IMR-90 (cell line): ENCODE measurements at regions of chr2 and their contacts with region 1.

Region 1: GRCh38 chr2:230614913-230615332 is 97.7 kb upstream of the CAB39 start:
- DNase-seq: no peak
- ATAC-seq: no peak
- H3K4me3 ChIP-seq: no peak overlapping the region
- H3K27ac ChIP-seq: no peak overlapping the region
- H3K4me1 ChIP-seq: peaks cover 10% of the 10 kb centered on the region
- H3K27me3 ChIP-seq: no peaks in the 10 kb centered on the region
- CTCF ChIP-seq: no peak
- POLR2A ChIP-seq: no peak
- RAD21 ChIP-seq: no peak

Region 2: GRCh38 chr2:229780856-229781773 is 833.8 kb before region 1 on chr2:
- CTCF ChIA-PET with region 1: no interaction called
- POLR2A ChIA-PET with region 1: no interaction called
- dilution Hi-C with region 1: no loop called
- in situ Hi-C with region 1: no loop called
- intact Hi-C with region 1: loop called (anchors 10 kb)
- DNase-seq: peak; percentile 77
- ATAC-seq: peak; percentile 85
- H3K4me3 ChIP-seq: no peak overlapping the region
- H3K27ac ChIP-seq: no peak overlapping the region; the same call in 1 of the 2 replicates
- H3K4me1 ChIP-seq: peaks cover 8% of the 10 kb centered on the region
- H3K27me3 ChIP-seq: no peaks in the 10 kb centered on the region
- CTCF ChIP-seq: peak; percentile 80
- POLR2A ChIP-seq: no peak
- RAD21 ChIP-seq: peak; percentile 46

Region 3: GRCh38 chr2:230007931-230008707 is 606.8 kb before region 1 on chr2:
- CTCF ChIA-PET with region 1: no interaction called
- POLR2A ChIA-PET with region 1: no interaction called
- dilution Hi-C with region 1: no loop called
- in situ Hi-C with region 1: loop called (anchors 5 kb)
- intact Hi-C with region 1: loop called (anchors 1 kb)
- DNase-seq: peak; percentile 71
- ATAC-seq: peak; percentile 52
- H3K4me3 ChIP-seq: no peak overlapping the region
- H3K27ac ChIP-seq: no peak overlapping the region
- H3K4me1 ChIP-seq: peaks cover 15% of the 10 kb centered on the region
- H3K27me3 ChIP-seq: no peaks in the 10 kb centered on the region
- CTCF ChIP-seq: peak; percentile 88
- POLR2A ChIP-seq: peak; percentile 34; the same call in 1 of the 2 replicates
- RAD21 ChIP-seq: peak; percentile 88

Region 4: GRCh38 chr2:230068016-230068650 is 546.8 kb before region 1 on chr2:
- CTCF ChIA-PET with region 1: no interaction called
- POLR2A ChIA-PET with region 1: no interaction called
- dilution Hi-C with region 1: no loop called
- in situ Hi-C with region 1: loop called (anchors 5 kb)
- intact Hi-C with region 1: loop called (anchors 1 kb)
- DNase-seq: peak; percentile 13
- ATAC-seq: peak; percentile 61
- H3K4me3 ChIP-seq: peak overlapping the region; percentile 46
- H3K27ac ChIP-seq: peak overlapping the region; percentile 39
- H3K4me1 ChIP-seq: no peaks in the 10 kb centered on the region
- H3K27me3 ChIP-seq: peaks cover 3% of the 10 kb centered on the region; the same call in 1 of the 2 replicates
- CTCF ChIP-seq: no peak
- POLR2A ChIP-seq: no peak
- RAD21 ChIP-seq: no peak

Region 5: DNA sequence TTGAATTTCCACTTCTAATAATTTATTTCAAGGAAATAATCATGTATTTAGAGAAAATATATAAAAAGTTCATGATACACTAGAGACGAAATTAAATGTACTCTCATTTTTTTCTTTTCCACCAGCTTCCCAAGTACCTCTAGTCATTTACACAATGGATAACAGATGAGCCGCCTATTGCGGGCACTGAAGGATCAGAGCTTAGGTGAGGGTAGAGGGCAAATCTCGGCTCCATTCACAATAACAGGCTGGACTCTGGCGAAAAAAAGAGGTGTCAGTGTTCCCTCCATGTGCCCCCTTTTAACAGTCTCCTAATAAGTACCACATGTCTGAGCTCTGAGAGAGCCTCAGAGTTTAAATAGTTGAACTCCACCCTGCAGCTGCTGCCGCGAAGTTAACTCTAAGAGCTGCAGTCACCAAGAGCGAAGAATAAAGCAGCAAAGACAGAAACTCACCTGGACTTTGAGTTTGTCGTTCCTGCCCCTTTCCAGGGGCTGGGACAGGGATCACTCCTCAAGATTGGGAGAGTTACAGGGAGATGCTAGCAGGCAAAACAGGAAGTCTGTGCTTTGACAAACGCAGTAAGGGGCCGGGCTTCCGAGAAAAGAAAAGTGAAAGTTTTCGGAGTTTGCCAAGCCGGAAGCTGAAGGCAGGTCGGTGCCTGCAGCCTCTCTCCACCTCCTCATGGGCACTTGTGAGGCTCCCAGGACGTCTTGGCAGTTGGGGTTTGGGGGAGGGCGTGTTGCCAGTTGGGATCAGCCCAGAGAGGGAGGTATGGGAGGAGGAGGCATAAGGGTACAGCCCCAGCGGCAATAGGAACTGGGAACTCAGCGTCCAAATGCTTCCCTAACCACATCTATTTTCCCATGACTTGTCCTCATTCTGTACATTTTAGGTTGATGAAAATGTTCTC is 395.2 kb before region 1 on chr2 and contains the start of gene SP110:
- CTCF ChIA-PET with region 1: no interaction called
- POLR2A ChIA-PET with region 1: no interaction called
- dilution Hi-C with region 1: no loop called
- in situ Hi-C with region 1: no loop called
- intact Hi-C with region 1: loop called (anchors 2 kb)
- DNase-seq: peak; percentile 80
- ATAC-seq: peak; percentile 93
- H3K4me3 ChIP-seq: peak within 1 kb of the TSS; percentile 94
- H3K27ac ChIP-seq: peak within 1 kb of the TSS; percentile 72
- H3K4me1 ChIP-seq: no peaks in the 10 kb centered on the region
- H3K27me3 ChIP-seq: no peaks in the 10 kb centered on the region
- CTCF ChIP-seq: no peak
- POLR2A ChIP-seq: no peak
- RAD21 ChIP-seq: peak; percentile 10; the same call in 1 of the 2 replicates
- total RNA-seq, gene SP110: 9.3 and 11.1 TPM in 2 replicates

Region 6: DNA sequence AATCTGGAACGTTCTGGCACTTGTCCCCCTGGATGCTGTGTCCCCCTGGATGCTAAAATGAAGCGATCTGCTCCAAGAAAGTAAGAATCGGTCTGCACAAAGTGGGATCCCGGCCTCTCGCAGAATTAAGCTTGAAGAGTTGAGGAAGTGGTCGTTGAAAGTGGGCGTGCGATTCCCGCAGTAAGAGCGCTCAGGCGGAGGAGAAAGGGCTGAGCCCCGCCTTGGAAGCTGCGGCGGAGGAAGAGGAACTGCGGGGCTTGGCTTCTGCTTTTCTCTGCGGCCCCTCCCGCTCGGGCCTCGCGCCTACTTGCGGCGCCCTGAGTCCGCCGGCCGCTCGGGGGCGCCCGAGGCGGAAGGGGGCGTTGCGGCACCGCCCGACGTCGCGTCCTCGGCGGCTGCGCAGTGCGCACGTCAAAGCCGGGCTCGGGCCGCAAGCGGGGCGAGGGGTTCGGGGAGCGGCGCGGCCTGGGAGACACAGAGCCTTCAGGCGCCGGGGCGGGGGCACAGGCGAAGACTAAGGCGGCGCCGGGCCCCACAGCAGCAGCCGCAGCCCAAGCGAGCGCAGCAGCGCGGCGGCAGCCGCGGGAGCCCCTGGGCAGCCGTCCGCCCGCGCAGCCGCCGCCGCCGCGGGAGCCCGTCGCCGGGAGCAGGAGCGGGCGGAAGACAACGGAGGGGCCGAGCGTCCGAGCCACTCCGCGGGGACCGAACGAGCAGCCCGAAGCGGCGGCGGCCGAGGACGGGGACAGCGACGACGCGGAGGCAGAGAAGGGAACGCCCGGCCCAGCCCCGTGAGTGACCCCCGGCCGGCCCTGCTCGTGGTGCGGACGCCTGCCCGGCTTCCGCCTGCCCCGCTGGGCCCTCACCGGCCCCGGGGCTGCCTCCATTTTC is 97.8 kb after region 1 on chr2 and contains the start of gene CAB39:
- CTCF ChIA-PET with region 1: no interaction called
- POLR2A ChIA-PET with region 1: interaction called, 5 read pairs
- dilution Hi-C with region 1: no loop called
- in situ Hi-C with region 1: no loop called
- intact Hi-C with region 1: loop called (anchors 1 kb)
- DNase-seq: peak; percentile 86
- ATAC-seq: peak; percentile 93
- H3K4me3 ChIP-seq: peak within 1 kb of the TSS; percentile 65
- H3K27ac ChIP-seq: peak within 1 kb of the TSS; percentile 91
- H3K4me1 ChIP-seq: peaks cover 10% of the 10 kb centered on the region
- H3K27me3 ChIP-seq: no peaks in the 10 kb centered on the region; the same call in 1 of the 2 replicates
- CTCF ChIP-seq: peak; percentile 97
- POLR2A ChIP-seq: peak; percentile 87
- RAD21 ChIP-seq: peak; percentile 61
- total RNA-seq, gene CAB39: 71.7 and 95.3 TPM in 2 replicates

Region 7: DNA sequence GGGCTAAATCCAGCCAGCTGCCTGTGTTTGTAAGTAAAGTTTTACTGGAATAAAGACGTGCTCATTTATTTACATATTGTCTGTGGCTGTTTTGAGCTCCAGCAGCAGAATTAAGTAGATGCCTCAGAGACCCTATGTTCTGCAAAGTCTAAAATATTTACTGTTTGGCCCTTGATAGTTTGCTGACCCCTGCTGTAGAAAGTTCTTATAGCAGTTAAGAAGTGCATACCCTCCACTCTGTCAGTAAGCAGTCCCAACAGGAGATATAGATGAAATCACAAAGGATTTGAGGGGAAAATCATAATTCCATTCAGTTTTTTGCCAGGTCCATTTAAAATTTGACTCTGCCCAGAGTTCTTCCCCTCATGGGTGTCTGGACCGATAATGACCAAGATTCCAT is 199.7 kb after region 1 on chr2:
- CTCF ChIA-PET with region 1: no interaction called
- POLR2A ChIA-PET with region 1: no interaction called
- dilution Hi-C with region 1: no loop called
- in situ Hi-C with region 1: loop called (anchors 10 kb)
- intact Hi-C with region 1: loop called (anchors 5 kb)
- DNase-seq: peak; percentile 47
- ATAC-seq: peak; percentile 76
- H3K4me3 ChIP-seq: no peak overlapping the region
- H3K27ac ChIP-seq: no peak overlapping the region
- H3K4me1 ChIP-seq: peaks cover 6% of the 10 kb centered on the region
- H3K27me3 ChIP-seq: no peaks in the 10 kb centered on the region
- CTCF ChIP-seq: peak; percentile 54
- POLR2A ChIP-seq: no peak
- RAD21 ChIP-seq: peak; percentile 65